HEK293T (cell line): ENCODE measurements at regions of chr17 and their contacts with region 1.

Region 1: DNA sequence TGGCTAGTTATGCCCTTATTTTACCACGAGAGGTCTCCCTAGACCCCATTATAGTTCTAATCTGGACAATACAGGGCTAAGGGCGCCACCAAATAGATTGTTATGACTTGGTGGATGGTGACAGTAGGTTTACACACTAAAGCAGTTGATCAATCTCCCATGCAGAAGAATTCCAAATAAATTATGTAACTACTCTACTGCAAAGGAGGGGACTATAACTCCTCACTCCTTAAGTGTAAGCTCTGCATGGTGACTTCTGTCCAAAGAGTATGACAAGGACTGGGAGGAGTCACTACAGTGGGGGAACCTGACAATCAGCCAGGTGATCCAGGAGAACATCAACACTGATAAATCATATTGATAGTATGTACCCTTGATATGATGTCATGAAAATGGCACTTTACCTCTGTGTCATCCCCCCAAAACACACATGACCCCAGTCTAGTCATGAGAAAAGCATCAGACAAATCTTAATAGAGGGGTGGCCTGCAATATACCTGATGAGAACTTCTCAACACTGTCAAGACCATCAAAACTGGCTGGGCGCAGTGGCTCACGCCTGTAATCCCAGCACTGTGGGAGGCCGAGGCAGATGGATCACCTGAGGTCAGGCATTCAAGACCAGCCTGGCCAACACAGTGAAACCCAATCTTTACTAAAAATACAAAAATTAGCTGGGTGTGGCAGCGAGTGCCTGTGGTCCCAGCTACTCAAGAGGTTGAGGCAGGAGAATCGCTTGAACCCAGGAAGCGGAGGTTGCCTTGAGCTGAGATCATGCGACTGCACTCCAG is 20.1 kb upstream of the YPEL2 start:
- DNase-seq: peak; percentile 73

Region 2: DNA sequence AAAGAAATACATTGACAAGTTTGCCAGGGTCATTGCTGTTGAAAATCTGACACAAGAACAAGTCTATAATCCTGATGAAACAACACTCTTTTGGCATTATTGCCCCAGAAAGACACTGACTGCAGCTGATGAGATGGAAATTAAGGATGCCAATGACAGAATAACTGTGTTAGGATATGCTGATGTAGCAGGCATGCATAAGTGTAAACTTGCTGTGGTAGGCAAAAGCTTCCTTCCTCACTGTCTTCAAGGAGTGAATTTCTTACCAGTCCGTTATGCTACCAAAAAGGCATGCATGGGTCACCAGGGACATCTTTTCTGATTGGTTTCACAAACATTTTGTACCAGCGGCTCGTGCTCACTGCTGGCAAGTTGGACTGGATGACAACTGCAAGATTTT is 80.6 kb before region 1 on chr17:
- CTCF ChIA-PET with region 1: interaction called, 11 read pairs
- POLR2A ChIA-PET with region 1: no interaction called
- DNase-seq: no peak

Region 3: DNA sequence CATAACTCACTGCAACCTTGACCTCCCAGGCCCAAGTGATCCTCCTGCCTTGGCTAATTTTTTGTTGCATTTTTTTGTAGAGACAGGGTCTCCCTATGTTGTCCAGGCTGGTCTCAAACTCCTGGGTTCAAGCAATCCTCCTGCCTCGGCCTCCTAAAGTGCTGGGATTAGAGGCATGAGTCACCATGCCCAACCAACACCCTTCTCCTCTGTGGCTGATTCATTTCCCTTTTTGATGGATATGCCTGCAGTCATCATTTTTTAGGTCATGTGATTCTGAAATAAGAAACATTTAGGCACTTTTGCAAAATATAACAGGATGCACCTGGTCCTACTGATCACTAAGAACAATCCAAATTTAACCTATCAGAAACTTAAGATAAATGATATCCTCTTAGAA is 23.9 kb before region 1 on chr17:
- CTCF ChIA-PET with region 1: no interaction called
- POLR2A ChIA-PET with region 1: no interaction called
- DNase-seq: no peak

Region 4: DNA sequence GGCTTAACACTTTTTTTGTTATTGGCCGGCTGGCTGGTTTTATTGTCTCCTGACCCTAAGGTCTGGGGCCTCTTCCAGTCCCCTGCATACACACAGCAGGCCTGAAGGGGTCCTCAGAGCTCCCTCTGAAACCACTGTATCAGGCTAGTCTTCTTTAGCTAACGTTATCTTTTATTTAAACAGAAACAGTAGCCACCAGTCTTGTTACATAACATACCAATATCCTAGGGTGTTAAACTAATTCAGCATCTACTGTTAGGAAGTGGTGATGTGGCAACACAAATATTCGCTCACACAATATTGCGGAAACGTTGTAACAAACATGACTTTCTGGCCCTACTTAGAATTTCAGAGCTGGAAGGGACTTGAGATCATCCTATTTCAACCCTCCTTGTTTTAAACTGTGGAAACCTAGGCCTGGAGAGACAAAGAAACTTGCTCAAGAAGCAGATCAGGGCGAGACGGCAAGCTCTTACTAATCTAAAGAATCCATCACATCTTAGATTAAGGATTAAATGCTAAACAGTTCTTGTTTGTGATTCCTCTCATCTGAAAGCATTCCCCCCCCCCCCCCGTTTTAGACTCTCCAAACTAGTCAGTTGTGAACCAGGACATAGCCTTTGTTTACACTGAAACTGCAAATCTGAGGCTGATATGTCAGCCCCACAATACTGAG is 18.5 kb after region 1 on chr17:
- CTCF ChIA-PET with region 1: interaction called, 12 read pairs
- POLR2A ChIA-PET with region 1: no interaction called
- DNase-seq: peak; percentile 70

Region 5: DNA sequence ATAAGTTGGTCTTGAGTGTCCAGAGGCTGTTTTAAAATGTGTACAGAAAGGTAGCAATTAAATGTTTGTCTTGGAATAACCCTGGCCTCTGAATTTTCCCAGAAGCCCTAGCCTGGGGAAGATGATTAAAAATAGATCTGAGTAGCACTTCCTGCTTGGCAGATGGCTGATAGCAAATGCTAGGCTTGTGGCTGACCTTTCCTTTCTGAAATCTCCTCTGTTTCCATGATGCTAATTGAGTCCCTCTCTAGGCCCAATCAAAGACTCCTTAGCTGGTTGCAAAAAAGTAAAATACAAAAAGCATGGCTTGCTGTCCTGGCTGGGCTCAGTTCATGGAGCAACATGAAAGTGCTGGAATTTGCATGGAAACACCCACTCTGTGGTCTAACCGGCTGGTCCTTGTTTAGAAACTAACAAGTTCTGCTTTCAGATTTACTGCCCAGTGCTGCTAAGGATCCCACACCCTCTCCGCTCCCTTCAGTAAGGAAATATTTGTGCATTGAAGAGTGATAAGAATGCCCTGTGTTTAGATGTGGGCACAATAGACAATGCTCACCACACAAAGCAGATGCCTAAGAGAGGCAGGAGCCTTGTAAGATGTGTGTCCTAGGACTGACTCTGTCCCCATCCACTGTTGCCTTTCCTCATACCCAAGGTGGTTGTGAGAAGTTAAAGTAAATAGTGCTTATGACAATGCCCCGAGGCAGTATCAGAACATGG is 61.0 kb after region 1 on chr17:
- CTCF ChIA-PET with region 1: no interaction called
- POLR2A ChIA-PET with region 1: no interaction called
- DNase-seq: no peak

Region 6: GRCh38 chr17:59440784-59441441 is 129.6 kb after region 1 on chr17:
- CTCF ChIA-PET with region 1: interaction called, 13 read pairs
- POLR2A ChIA-PET with region 1: no interaction called
- DNase-seq: peak; percentile 87